ENCODE measurements at regions of chr6 and their contacts with region 1.

Region 1: GRCh38 chr6:42563697-42564505 is at the start of gene UBR2:
- DNase-seq: peak; percentile 99
- H3K4me3 ChIP-seq: peak within 1 kb of the TSS; percentile 67 to 96 (median 76)
- H3K27ac ChIP-seq: peak within 1 kb of the TSS; percentile 91 to 97 (median 94)
- H3K4me1 ChIP-seq: peaks cover 11 to 41% (median 36%) of the 10 kb centered on the region in 4 donors
- H3K27me3 ChIP-seq: no peaks in the 10 kb centered on the region
- CTCF ChIP-seq: peak in 2 of 3 experiments; percentile 30 to 55
- EP300 ChIP-seq: no peak
- POLR2A ChIP-seq: peak; percentile 79
- total RNA-seq, gene UBR2: 26.5 to 36.1 (median 28.9) TPM

Region 2: DNA sequence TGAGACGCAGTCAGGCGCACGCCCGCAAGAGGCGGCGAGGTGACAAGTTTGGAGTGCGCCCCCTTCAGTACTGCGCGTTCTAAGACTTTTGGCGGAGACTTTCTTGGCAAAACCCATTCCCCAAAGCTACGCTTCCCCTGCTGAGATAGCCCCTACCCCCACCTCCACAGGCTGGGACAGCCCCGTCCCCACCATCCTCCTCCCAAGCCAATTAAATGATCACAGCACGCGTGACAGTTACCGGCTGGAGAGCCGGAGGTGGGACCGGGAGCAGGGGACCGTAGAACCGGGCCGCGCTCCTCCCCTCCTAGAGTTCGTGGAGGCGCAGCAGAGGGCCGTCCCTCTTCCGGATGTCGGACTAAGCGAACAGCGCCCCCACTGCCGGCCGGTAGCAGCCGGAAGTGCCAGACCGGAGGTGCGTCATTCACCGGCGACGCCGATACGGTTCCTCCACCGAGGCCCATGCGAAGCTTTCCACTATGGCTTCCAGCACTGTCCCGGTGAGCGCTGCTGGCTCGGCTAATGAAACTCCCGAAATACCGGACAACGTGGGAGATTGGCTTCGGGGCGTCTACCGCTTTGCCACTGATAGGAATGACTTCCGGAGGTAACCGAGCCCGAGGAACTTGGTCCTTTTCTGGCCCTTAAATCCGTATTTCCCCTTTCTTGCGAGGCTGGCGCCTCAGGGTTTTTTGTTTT is 776.5 kb before region 1 on chr6 and contains the start of gene TOMM6:
- intact Hi-C with region 1: loop called (anchors 10 kb)
- DNase-seq: peak; percentile 98
- H3K4me3 ChIP-seq: peak within 1 kb of the TSS; percentile 69 to 91 (median 76)
- H3K27ac ChIP-seq: peak within 1 kb of the TSS; percentile 92 to 96 (median 94)
- H3K4me1 ChIP-seq: peaks cover 33 to 67% (median 49%) of the 10 kb centered on the region in 4 donors
- H3K27me3 ChIP-seq: no peaks in the 10 kb centered on the region
- CTCF ChIP-seq: peak; percentile 70 to 89 (median 83)
- EP300 ChIP-seq: no peak
- POLR2A ChIP-seq: no peak
- total RNA-seq, gene TOMM6: 52.1 to 117 (median 86.9) TPM

Region 3: DNA sequence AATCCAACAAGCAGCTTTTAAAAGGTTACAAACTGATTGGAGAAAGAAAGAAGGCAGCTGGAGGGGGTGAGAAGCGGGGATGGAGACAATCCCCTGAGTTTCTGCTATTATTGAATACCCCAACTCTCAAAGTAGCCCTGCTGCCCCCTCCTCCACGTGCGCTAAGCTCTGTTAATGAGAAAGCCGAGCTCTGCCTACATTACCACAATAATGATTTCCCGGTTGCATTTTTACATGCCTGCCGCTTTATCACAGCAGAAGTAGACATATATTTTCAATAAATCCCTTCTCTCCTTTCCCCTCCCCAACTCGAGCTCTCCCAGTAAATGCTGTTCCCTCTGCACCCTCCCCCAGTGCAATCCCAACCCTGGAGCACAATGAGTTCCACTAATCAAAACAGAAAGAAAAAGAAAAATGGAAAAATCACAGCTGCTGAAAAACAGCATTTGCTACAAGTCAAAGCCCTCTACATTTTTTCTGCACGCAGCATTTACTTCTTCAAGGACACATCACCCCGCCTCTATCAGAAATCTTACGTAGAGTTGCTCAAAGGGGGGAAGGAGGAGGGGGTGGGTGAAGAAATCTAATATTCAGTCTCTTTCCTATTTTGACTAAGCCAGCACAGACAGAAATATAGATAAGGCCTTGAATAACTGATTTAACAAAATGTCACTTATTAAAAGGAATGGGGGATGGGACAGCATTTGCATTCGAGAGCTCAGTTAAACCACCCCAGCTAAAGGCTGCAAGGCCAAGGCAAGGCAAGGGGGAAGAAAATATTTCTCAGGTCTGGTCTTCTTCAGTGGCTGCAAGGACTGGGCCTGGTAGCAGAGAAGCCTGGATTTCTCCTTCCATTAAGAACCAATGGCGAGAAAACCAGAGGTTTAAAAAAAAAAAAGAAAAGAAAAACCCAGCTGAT is 122.9 kb before region 1 on chr6:
- intact Hi-C with region 1: no loop called
- DNase-seq: no peak
- H3K4me3 ChIP-seq: peak overlapping the region; percentile 26 to 50 (median 36)
- H3K27ac ChIP-seq: peak overlapping the region; percentile 78 to 86 (median 82)
- H3K4me1 ChIP-seq: peaks cover 33 to 64% (median 59%) of the 10 kb centered on the region in 4 donors
- H3K27me3 ChIP-seq: no peaks in the 10 kb centered on the region
- CTCF ChIP-seq: no peak
- EP300 ChIP-seq: no peak
- POLR2A ChIP-seq: no peak

Region 4: GRCh38 chr6:42505377-42505702 is 58.6 kb before region 1 on chr6:
- intact Hi-C with region 1: no loop called
- DNase-seq: no peak
- H3K4me3 ChIP-seq: no peak overlapping the region
- H3K27ac ChIP-seq: no peak overlapping the region
- H3K4me1 ChIP-seq: no peaks in the 10 kb centered on the region
- H3K27me3 ChIP-seq: no peaks in the 10 kb centered on the region
- CTCF ChIP-seq: no peak
- EP300 ChIP-seq: no peak
- POLR2A ChIP-seq: no peak

Measured in esophagus muscularis mucosa (tissue), 4 donors.